ENCODE measurements at regions of chr4 and their contacts with region 1.

Region 1: DNA sequence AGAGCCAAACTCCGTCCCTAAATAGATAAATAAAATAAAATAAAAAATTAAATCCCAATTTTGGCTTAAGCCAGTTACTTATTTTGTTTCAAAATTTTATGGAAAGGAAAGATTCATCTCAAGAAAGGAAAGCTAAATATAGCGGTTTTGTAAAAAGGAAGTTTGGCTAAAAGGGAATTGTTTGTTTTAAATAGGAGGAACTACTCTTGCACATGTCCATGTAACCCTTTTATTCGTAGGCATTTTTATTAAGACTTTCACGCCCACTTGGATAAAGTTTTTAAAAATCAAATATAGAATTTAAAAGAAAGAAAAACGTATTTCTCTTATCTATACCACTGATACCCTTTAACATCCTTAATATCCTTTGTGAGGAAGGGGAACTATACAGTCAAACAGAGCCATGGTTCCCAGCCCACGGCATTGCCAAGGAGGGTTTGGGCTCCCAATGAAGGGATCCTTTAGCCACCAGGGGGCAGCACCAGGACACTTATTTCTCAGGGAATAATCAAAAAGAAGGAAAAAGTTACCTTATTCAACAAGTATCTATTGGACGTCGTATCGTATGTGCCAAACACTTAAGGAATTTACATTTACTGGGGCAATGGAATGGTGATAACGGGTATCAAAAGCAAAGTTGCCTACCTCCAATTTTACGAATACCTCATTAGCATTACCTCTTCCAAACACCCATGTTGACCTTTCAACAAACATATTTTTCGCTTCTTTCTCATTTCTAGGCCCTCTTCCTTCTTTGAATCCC is 27.7 kb downstream of the CDKN2AIP start:
- DNase-seq: peak; percentile 63 to 73 (median 68)
- H3K4me3 ChIP-seq: no peak overlapping the region
- H3K4me3 Mint-ChIP-seq: peak overlapping the region in 1 of 8 donors; percentile 32
- H3K27ac ChIP-seq: no peak overlapping the region
- H3K27ac Mint-ChIP-seq: peak overlapping the region in 1 of 7 donors; percentile 8
- H3K4me1 ChIP-seq: peaks cover 3% of the 10 kb centered on the region
- H3K4me1 Mint-ChIP-seq: peaks cover 0 to 6% (median 2%) of the 10 kb centered on the region in 4 donors
- H3K27me3 ChIP-seq: no peaks in the 10 kb centered on the region
- H3K27me3 Mint-ChIP-seq: no peaks in the 10 kb centered on the region

Region 2: GRCh38 chr4:183266386-183266785 is 205.7 kb before region 1 on chr4:
- CTCF ChIA-PET with region 1: no interaction called
- POLR2A ChIA-PET with region 1: no interaction called
- intact Hi-C with region 1: no loop called
- DNase-seq: no peak
- H3K4me3 ChIP-seq: no peak overlapping the region
- H3K4me3 Mint-ChIP-seq: no peak overlapping the region
- H3K27ac ChIP-seq: no peak overlapping the region
- H3K27ac Mint-ChIP-seq: no peak overlapping the region
- H3K4me1 ChIP-seq: peaks cover 5% of the 10 kb centered on the region
- H3K4me1 Mint-ChIP-seq: peaks cover 5 to 8% (median 7%) of the 10 kb centered on the region in 4 donors
- H3K27me3 ChIP-seq: no peaks in the 10 kb centered on the region
- H3K27me3 Mint-ChIP-seq: no peaks in the 10 kb centered on the region

Region 3: DNA sequence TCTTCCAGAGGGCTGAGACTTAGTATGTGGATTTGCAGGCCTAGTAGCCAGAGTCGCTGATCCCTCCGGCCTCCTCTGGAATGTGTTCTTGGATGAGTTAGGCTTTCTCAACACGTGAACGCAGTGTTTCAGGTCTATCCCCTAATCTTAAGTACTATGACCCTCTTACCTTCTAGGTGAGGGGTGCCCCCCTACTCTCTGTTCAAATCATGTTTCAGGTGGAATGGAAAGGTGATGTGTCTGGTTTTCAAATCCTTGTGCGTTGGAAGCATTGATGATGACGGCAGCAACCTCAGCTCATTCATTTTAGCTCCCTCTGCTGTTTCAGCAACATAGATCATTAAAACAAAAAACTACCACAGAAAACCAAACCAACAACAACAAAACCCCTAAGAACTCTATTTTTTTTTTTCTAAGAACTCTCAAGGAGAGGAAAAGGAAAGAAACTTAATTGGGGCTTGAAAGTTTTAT is 130.5 kb after region 1 on chr4:
- CTCF ChIA-PET with region 1: interaction called, 30 read pairs
- POLR2A ChIA-PET with region 1: no interaction called
- intact Hi-C with region 1: loop called (anchors 1 kb)
- DNase-seq: peak in 3 of 5 donors; percentile 1 to 5 (median 3)
- H3K4me3 ChIP-seq: no peak overlapping the region
- H3K4me3 Mint-ChIP-seq: no peak overlapping the region
- H3K27ac ChIP-seq: no peak overlapping the region
- H3K27ac Mint-ChIP-seq: no peak overlapping the region
- H3K4me1 ChIP-seq: no peaks in the 10 kb centered on the region
- H3K4me1 Mint-ChIP-seq: peaks cover 0 to 2% (median under 1%) of the 10 kb centered on the region in 4 donors
- H3K27me3 ChIP-seq: no peaks in the 10 kb centered on the region
- H3K27me3 Mint-ChIP-seq: peaks cover 2 to 6% of the 10 kb centered on the region in 2 donors

Region 4: GRCh38 chr4:183659029-183659871 is 187.1 kb after region 1 on chr4 and contains the starts of genes RWDD4 and TRAPPC11:
- CTCF ChIA-PET with region 1: no interaction called
- POLR2A ChIA-PET with region 1: no interaction called
- intact Hi-C with region 1: loop called (anchors 1 kb)
- DNase-seq: peak; percentile 95 to 98 (median 96)
- H3K4me3 ChIP-seq: peak within 1 kb of the TSS; percentile 89 to 91
- H3K4me3 Mint-ChIP-seq: peak within 1 kb of the TSS; percentile 91 to 98 (median 94)
- H3K27ac ChIP-seq: peak within 1 kb of the TSS; percentile 93
- H3K27ac Mint-ChIP-seq: peak within 1 kb of the TSS; percentile 75 to 99 (median 97)
- H3K4me1 ChIP-seq: peaks cover 37% of the 10 kb centered on the region
- H3K4me1 Mint-ChIP-seq: peaks cover 25 to 54% (median 41%) of the 10 kb centered on the region in 4 donors
- H3K27me3 ChIP-seq: no peaks in the 10 kb centered on the region
- H3K27me3 Mint-ChIP-seq: no peaks in the 10 kb centered on the region
- total RNA-seq, gene RWDD4: 12.0 to 13.8 TPM
- total RNA-seq, gene TRAPPC11: 42.2 to 51.0 TPM

Region 5: DNA sequence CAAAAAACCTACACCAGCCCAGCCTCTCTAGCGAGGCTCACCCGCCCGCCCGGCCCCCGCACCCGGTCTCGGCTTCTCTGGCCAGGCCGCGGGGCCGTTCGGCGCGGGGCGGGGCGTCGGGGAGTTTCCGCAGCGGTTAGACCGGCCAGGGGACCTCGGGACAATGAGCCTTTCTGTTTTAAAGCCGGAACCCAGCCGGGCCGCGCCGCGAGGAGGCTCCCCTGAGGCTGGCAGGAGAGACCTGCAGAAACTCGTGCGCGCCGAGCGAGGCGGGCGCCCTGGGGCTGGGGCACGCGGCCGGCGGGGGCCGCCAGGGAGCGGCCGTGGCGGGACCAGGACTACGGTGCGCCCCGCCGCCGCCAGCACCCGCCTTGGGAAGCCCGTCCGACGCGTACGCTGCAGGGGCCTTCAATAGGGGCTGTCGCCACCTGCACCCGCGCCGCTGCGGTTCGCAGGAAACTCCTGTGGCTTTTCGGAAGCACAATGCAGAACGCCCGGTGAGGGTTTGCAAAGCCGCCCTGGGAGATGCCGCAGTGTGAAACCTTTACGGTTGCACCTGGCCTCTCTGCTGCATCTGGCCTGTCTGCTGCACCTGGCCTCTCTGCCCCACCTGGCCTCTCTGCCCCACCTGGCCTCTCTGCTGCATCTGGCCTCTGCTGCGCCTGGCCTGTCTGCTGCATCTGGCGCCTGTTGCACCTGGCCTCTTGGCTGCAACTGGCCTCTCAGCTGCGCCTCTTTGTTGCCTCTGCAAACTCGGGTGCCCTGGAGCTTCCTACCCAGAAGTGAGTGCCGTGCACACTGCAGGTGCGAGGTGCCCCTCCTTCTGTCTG is 250.8 kb after region 1 on chr4:
- CTCF ChIA-PET with region 1: no interaction called
- POLR2A ChIA-PET with region 1: no interaction called
- intact Hi-C with region 1: loop called (anchors 2 kb)
- DNase-seq: peak; percentile 42 to 62 (median 51)
- H3K4me3 ChIP-seq: peak overlapping the region in 1 of 2 donors; percentile 64
- H3K4me3 Mint-ChIP-seq: peak overlapping the region; percentile 85 to 94 (median 90)
- H3K27ac ChIP-seq: no peak overlapping the region
- H3K27ac Mint-ChIP-seq: peak overlapping the region; percentile 19 to 88 (median 64)
- H3K4me1 ChIP-seq: peaks cover 9% of the 10 kb centered on the region
- H3K4me1 Mint-ChIP-seq: peaks cover 10 to 16% (median 15%) of the 10 kb centered on the region in 4 donors
- H3K27me3 ChIP-seq: no peaks in the 10 kb centered on the region
- H3K27me3 Mint-ChIP-seq: peaks cover 0 to 5% of the 10 kb centered on the region in 2 donors

Region 6: GRCh38 chr4:183840311-183840710 is 368.2 kb after region 1 on chr4:
- CTCF ChIA-PET with region 1: no interaction called
- POLR2A ChIA-PET with region 1: no interaction called
- intact Hi-C with region 1: loop called (anchors 10 kb)
- DNase-seq: peak; percentile 43 to 49 (median 47)
- H3K4me3 ChIP-seq: no peak overlapping the region
- H3K4me3 Mint-ChIP-seq: no peak overlapping the region
- H3K27ac ChIP-seq: no peak overlapping the region
- H3K27ac Mint-ChIP-seq: peak overlapping the region in 1 of 7 donors; percentile 15
- H3K4me1 ChIP-seq: no peaks in the 10 kb centered on the region
- H3K4me1 Mint-ChIP-seq: no peaks in the 10 kb centered on the region
- H3K27me3 ChIP-seq: no peaks in the 10 kb centered on the region
- H3K27me3 Mint-ChIP-seq: peaks cover 13 to 23% of the 10 kb centered on the region in 2 donors

Region 7: DNA sequence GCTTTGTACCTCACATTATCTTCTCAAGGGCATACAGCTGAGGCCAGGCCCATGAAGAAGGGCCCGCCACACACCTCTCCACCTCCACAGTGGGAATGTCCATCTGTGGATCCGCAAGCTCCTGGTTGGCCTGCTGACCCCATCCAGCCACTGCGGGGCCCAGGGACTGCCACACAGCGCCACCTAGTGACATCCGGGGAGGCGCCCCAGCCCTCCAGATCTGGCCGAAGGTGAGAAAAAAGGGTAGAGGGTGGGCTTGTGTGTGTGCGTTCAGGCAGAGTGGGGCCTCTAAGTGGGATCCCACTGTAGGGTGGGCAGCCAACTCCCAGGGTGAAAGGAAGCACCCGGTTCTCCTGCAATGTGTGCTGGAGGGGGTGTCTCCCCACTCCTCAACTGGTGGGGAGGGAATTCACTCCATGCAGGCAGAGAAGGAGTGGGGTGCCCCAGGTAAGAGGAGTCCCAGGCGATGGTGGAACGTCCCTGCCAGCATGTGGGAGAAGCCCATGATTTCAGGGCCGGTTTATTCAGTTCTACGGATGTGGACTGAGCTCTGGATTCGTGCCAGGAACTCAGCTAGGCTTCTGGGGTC is 628.3 kb after region 1 on chr4:
- CTCF ChIA-PET with region 1: no interaction called
- POLR2A ChIA-PET with region 1: no interaction called
- intact Hi-C with region 1: loop called (anchors 2 kb)
- DNase-seq: peak in 1 of 5 donors; percentile 10
- H3K4me3 ChIP-seq: no peak overlapping the region
- H3K4me3 Mint-ChIP-seq: no peak overlapping the region
- H3K27ac ChIP-seq: no peak overlapping the region
- H3K27ac Mint-ChIP-seq: no peak overlapping the region
- H3K4me1 ChIP-seq: peaks cover 5% of the 10 kb centered on the region
- H3K4me1 Mint-ChIP-seq: peaks cover 0 to 7% (median 2%) of the 10 kb centered on the region in 4 donors
- H3K27me3 ChIP-seq: no peaks in the 10 kb centered on the region
- H3K27me3 Mint-ChIP-seq: peaks cover 6 to 20% of the 10 kb centered on the region in 2 donors

Measured in CD4-positive, alpha-beta memory T cell (primary cell).